ENCODE measurements at regions of chr6 and their contacts with region 1.

Region 1: GRCh38 chr6:168082860-168083513 is 4.0 kb upstream of the FRMD1 start:
- DNase-seq: no peak
- H3K4me3 ChIP-seq: no peak overlapping the region
- H3K27ac ChIP-seq: no peak overlapping the region
- H3K4me1 ChIP-seq: no peaks in the 10 kb centered on the region
- H3K27me3 ChIP-seq: no peaks in the 10 kb centered on the region
- CTCF ChIP-seq: no peak

Region 2: DNA sequence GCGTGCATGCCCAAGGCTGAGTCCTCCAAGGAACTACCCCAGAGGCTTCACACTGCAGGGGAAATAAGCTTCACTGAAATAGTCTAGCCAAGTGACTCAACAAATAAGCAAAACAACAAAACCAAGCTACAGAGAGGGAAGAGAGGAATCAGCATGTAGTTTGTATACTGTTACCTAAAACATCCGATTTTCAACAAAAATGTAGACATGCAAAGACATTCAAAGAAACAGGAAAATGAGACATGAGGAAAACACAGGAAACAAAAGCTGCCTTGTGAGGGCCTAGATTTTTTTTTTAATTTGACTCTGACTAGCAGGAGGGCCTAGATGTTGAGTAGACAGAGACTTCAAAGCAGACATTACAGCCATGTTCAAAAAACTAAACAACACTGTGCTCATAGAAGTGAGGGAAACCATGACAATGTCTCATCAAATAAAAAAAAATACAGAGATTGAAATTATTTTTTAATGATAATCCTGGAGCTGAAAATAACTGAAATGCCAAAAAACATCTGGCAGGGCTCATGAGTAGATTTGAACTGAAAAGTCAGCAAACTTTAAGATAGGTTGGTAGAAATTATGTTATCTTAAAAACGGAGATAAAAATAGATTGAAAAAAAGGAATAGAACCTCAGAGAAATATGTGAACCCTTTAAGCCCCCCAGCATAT is 101.9 kb before region 1 on chr6:
- CTCF ChIA-PET with region 1: no interaction called
- dilution Hi-C with region 1: loop called (anchors 5 kb)
- in situ Hi-C with region 1: no loop called
- intact Hi-C with region 1: no loop called
- DNase-seq: no peak
- H3K4me3 ChIP-seq: no peak overlapping the region
- H3K27ac ChIP-seq: no peak overlapping the region
- H3K4me1 ChIP-seq: no peaks in the 10 kb centered on the region
- H3K27me3 ChIP-seq: peaks cover 5% of the 10 kb centered on the region
- CTCF ChIP-seq: no peak

Measured in mammary epithelial cell (primary cell).